Breast epithelium (tissue), 4 donors: ENCODE measurements at regions of chr2 and their contacts with region 1.

Region 1: DNA sequence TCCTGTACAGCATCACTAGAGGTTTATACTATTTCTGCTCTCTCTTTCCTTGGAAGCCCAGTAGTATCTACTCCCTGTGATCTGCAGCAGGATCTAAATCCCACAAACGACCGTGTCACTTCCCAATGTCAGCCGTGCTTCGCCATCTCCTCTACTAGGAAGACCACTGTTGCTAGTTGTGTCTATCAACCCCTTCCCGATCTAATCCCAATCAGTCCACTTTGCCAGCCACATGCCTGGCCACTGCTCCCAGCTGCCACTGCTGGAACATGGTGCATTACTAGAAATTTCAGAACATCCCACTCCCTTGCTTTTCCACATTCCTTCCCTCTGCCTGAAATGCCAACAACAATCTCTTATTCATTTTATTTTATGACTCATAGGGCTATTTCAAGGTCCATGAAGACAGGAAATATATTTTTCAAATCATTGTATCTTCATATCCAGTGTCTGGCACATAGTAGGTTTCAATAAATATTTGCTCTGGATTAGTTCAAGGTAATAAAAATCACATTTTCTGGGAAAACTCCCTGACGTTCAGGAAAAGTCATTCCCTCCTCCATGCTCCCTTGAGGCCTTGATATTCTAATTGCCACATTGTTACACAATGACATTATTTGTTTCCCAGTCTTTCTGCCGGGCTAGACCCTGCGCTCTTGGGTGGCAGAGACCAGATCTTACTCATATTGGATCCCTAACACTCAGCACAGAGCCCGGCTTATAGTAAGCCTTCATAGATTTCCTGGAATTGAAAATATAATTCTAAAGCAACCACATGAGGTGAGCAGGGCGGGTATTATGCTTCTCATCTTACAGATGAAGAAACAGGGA is 2.1 kb upstream of the TRIB2 start:
- DNase-seq: peak in 1 of 2 donors; percentile 45
- H3K4me3 ChIP-seq: no peak overlapping the region
- H3K27ac ChIP-seq: peak overlapping the region; percentile 91 to 92
- H3K4me1 ChIP-seq: peaks cover 0 to 17% of the 10 kb centered on the region in 2 donors
- H3K27me3 ChIP-seq: no peaks in the 10 kb centered on the region
- CTCF ChIP-seq: no peak
- POLR2A ChIP-seq: no peak

Region 2: DNA sequence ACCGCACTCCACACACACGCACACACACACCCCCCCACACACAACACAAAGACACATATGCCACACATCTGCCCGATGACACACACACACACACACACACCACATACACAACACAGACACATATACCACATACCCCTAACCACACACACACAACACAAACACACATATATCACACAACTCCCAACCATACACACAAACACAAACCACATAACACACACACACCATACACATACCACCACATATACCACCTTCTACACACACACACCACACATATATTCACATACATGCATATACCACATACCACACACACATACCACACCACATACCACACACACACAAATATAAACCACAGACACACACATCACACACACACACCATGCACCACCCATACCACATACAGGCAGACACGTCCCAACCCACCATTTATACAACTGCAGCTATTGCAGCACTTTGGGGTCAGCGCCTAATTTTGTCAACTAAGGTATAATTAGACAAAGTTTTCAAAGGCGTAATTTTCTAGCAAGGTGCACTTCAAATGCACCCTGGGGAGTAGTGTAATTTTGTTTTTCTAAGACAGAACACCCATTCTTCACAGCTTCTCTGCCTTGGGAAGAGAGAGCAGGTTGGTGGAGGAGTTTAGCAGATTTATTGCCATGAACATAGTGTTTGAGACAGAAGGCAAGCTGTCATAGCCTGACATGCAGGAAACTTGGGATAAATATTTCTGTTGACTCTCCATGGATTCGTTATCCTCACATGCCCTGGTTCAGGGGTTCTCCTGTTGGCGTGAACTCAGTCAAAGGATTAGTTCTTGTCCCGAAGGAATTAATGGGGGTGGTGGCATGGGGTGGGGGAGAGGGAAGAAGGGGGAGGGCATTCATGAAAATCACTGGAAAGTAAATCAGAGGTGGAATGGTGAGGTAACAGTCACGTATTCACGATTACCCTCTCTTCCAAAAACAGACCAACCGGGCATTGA is 552.0 kb before region 1 on chr2:
- intact Hi-C with region 1: loop called (anchors 5 kb)
- DNase-seq: no peak
- H3K4me3 ChIP-seq: no peak overlapping the region
- H3K27ac ChIP-seq: no peak overlapping the region
- H3K4me1 ChIP-seq: no peaks in the 10 kb centered on the region
- H3K27me3 ChIP-seq: no peaks in the 10 kb centered on the region
- CTCF ChIP-seq: no peak
- POLR2A ChIP-seq: no peak

Region 3: GRCh38 chr2:12613137-12613835 is 101.3 kb before region 1 on chr2:
- intact Hi-C with region 1: no loop called
- DNase-seq: no peak
- H3K4me3 ChIP-seq: no peak overlapping the region
- H3K27ac ChIP-seq: peak overlapping the region; percentile 75 to 78
- H3K4me1 ChIP-seq: no peaks in the 10 kb centered on the region
- H3K27me3 ChIP-seq: no peaks in the 10 kb centered on the region
- CTCF ChIP-seq: no peak
- POLR2A ChIP-seq: no peak

Region 4: DNA sequence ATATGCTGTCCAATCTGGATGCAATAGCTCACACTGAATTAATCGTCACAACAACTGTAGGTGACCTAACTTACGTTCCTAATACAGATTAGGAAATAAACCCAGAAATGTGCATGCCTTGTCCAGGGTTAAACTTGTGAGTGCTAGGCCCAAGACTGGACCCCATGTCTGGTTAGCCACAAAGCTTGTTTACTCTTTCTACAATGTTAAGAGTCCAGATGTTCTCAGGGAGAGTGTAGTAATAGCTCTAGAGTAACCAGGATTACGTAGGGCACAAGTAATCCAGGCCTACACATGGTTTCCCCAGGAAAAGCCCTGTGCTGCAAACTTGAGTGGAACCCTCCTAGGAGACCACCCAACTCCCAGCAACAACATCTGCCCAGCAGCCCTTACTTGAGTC is 28.3 kb after region 1 on chr2:
- intact Hi-C with region 1: no loop called
- DNase-seq: no peak
- H3K4me3 ChIP-seq: no peak overlapping the region
- H3K27ac ChIP-seq: no peak overlapping the region
- H3K4me1 ChIP-seq: no peaks in the 10 kb centered on the region
- H3K27me3 ChIP-seq: no peaks in the 10 kb centered on the region
- CTCF ChIP-seq: no peak
- POLR2A ChIP-seq: no peak